ENCODE measurements at regions of chr5 and their contacts with region 1.

Region 1: DNA sequence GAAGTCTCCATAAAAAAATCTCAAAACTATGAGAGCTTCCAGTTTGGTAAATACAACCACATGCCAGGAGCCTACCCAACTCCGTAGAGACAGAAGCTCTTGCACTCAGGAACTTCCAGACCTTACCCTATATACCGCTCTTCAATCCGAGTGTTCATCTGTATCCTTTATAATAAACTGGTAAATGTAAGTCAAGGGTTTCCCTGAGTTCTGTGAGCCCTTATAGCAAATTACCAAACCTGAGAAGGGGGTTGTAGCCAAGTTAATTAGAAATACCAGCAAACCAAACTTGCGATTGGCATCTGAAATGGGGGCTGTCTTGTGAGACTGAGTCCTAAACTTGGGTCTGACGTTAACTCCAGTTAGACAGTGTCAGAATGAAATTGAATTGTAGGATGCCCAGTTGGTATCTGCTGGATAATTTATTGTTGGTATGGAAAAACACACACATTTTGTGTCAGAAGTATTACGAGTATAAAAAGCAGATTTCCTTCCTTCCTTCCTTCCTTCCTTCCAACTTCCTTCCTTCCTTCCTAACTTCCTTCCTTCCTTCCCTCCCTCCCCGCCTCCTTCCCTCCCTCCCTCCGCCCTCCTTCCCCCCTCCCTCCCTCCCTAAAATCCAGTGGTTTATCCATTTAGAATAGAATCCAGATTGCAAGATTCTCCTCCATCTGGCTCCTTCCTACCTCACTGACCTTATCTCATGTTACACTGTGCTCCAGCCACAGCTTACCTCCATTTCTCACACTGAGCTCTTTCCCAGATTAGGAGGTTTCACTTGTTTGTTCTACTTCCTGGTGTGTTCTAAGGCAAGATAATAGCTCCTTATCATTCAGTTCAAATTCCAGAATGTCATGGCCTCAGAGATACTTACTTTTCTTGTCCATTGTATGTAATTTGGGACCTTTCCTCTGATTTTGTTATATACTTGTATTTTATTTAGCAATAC is 196.7 kb downstream of the WDR70 start:
- DNase-seq: peak; percentile 51 to 52
- H3K4me3 ChIP-seq: no peak overlapping the region
- H3K4me3 Mint-ChIP-seq: peak overlapping the region; percentile 41
- H3K27ac Mint-ChIP-seq: peak overlapping the region; percentile 62
- H3K4me1 ChIP-seq: peaks cover 28% of the 10 kb centered on the region
- H3K4me1 Mint-ChIP-seq: peaks cover 16% of the 10 kb centered on the region
- H3K27me3 ChIP-seq: no peaks in the 10 kb centered on the region
- H3K27me3 Mint-ChIP-seq: no peaks in the 10 kb centered on the region
- CTCF ChIP-seq: no peak

Region 2: GRCh38 chr5:37668524-37669047 is 92.8 kb after region 1 on chr5:
- CTCF ChIA-PET with region 1: no interaction called
- POLR2A ChIA-PET with region 1: no interaction called
- intact Hi-C with region 1: loop called (anchors 1 kb)
- DNase-seq: peak; percentile 78 to 82
- H3K4me3 ChIP-seq: no peak overlapping the region
- H3K4me3 Mint-ChIP-seq: no peak overlapping the region
- H3K27ac Mint-ChIP-seq: peak overlapping the region; percentile 30
- H3K4me1 ChIP-seq: peaks cover 14% of the 10 kb centered on the region
- H3K4me1 Mint-ChIP-seq: peaks cover 7% of the 10 kb centered on the region
- H3K27me3 ChIP-seq: no peaks in the 10 kb centered on the region
- H3K27me3 Mint-ChIP-seq: no peaks in the 10 kb centered on the region
- CTCF ChIP-seq: no peak

Region 3: GRCh38 chr5:38515646-38516045 is 939.8 kb after region 1 on chr5:
- CTCF ChIA-PET with region 1: no interaction called
- POLR2A ChIA-PET with region 1: no interaction called
- intact Hi-C with region 1: no loop called
- DNase-seq: peak in 1 of 2 experiments; percentile 17
- H3K4me3 ChIP-seq: no peak overlapping the region
- H3K4me3 Mint-ChIP-seq: no peak overlapping the region
- H3K27ac Mint-ChIP-seq: no peak overlapping the region
- H3K4me1 ChIP-seq: no peaks in the 10 kb centered on the region
- H3K4me1 Mint-ChIP-seq: no peaks in the 10 kb centered on the region
- H3K27me3 ChIP-seq: no peaks in the 10 kb centered on the region
- H3K27me3 Mint-ChIP-seq: no peaks in the 10 kb centered on the region
- CTCF ChIP-seq: peak; percentile 29 to 67